Dorsolateral prefrontal cortex (tissue), 120 donors: ENCODE measurements at regions of chr6 and their contacts with region 1.

Region 1: DNA sequence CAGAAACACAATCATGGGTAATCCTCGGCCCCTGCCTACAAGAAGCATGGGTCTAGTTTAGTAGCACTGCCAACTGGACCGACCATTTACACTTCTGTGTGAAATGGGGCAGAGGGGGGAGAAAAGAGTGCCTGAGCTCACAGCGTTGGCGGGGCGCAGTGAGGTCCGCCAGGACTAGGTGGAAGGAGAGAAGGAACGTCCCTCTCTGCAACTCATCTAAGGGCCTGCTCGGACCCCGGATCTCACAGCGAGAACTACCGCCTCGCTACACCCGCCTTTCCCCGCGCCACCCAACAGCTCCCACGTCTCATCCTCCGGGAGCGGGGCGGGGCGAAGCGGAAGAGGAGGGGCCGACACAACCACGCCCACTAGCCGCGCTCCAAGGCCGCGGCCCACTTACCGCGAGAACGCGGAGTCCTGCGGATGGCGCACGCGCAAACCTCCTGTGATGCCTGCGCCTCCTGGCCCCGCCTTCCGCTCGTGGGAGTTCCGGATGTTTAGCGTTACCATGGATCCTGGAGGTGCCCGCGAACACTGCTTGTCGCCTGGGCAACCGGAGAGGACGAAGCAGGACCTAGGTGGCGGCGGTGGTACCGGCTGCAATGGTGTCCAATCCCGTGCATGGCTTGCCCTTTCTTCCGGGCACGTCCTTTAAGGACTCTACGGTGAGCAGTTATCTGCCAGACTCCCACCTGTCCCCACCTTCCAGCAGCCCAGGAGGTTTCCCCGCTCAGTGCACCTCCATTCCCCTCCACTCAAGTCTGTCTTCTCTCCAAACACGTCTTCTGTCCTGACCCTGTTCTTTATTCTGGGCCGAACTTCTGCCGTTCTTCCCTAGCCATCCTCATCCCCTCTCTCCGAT is at the start of gene EFHC1:
- DNase-seq: peak; percentile 96 to 99 (median 98)
- H3K4me3 ChIP-seq: peak within 1 kb of the TSS; percentile 49 to 100 (median 86)
- H3K27ac ChIP-seq: peak within 1 kb of the TSS in 58 of 59 donors; percentile 14 to 92 (median 77)
- H3K27me3 ChIP-seq: no peaks in the 10 kb centered on the region
- CTCF ChIP-seq: peak in 46 of 56 donors; percentile 7 to 65 (median 36)
- total RNA-seq, gene EFHC1: 18.1 to 39.8 (median 27.3) TPM

Region 2: GRCh38 chr6:52371656-52372191 is 48.3 kb before region 1 on chr6:
- intact Hi-C with region 1: no loop called
- DNase-seq: no peak
- H3K4me3 ChIP-seq: peak overlapping the region in 1 of 59 donors; percentile 18
- H3K27ac ChIP-seq: peak overlapping the region in 45 of 59 donors; percentile 7 to 99 (median 92)
- H3K27me3 ChIP-seq: no peaks in the 10 kb centered on the region
- CTCF ChIP-seq: no peak

Region 3: DNA sequence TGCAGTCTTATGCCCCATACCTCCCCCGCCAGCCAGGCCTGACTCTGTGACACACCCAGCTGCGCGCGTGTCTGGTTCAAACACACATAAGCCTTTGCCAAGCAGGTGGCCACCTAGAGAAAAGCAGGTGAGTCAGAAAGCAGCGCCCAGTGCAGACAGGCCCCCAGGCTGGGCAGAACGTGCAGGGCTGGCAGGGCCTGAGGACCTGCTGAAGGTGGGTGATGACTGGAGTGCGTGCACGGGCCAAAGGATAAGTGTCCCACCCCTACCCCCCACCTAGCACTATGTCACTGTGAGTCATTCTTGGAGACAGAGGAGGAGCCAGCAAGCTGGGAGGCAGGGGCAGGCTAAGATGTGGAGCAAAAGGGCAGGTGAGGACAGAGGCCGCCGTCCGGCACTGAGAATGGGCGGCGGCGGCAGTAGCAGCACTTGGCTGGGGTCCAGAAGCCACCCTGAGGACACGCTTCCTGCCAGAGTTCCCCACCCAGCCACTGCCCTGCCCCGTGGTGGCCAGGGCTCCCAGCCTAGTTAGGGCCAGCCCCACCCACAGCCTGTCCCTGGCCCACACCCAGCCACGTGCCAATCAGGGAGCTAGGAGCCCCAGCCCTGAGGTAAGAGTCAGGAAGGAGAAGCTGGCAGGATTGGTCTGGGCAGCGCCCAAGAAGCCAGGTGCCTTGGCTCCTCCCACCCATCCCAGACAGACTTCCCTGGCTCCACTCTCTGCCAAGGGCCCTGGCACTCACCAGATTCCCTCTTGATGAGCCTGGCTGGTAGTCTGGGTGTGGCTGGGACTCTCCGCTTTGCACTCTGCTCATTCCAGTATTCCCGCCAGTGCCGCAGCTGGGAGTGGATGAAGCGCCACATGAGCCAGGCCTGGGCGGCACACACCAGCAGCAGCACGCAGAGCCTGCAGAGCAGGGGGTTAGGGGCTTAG is 84.1 kb after region 1 on chr6:
- intact Hi-C with region 1: loop called in 1 of 2 experiments (anchors 10 kb)
- DNase-seq: peak in 1 of 10 donors; percentile 79
- H3K4me3 ChIP-seq: no peak overlapping the region
- H3K27ac ChIP-seq: peak overlapping the region in 9 of 59 donors; percentile 12 to 63 (median 37)
- H3K27me3 ChIP-seq: no peaks in the 10 kb centered on the region
- CTCF ChIP-seq: no peak

Region 4: DNA sequence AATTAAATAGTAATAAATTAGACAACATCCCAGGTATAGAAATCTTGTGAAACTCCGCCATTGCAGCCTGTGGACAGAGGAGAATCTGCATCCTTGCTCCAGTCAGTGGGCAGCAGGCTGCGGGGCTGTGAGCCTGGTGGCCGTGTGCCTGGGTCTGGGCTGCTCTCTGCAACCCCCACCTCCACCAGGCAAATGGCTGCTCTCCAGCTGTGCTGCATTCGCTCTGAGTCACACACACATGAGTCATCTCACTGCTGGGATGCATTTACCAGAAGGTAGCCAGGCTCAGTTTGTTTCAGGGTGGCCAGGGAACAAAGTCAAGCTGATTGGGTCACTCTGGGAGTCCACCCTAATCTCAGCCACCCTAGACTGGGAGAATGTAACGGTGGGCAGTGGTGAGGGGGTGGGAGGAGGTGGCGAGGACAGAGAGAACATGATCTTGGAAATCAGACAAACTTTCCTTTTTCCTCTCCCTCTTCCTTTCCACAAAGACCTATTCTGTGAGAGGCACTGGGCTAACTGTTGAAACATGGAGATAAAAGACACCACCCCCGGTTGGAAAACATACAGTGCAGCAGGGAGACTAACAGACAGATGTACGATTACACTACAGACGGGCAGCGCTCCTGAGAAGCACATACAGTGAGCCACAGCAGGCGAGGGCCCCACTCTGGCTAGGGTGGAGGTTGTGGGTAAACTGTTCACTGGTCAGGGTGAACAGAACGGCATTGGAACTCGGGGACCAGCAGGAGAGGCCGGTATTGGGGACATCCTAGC is 97.7 kb after region 1 on chr6:
- intact Hi-C with region 1: loop called in 1 of 2 experiments (anchors 5 kb)
- DNase-seq: peak in 9 of 10 donors; percentile 50 to 95 (median 82)
- H3K4me3 ChIP-seq: peak overlapping the region in 36 of 59 donors; percentile 2 to 49 (median 24)
- H3K27ac ChIP-seq: peak overlapping the region; percentile 32 to 98 (median 84)
- H3K27me3 ChIP-seq: no peaks in the 10 kb centered on the region
- CTCF ChIP-seq: peak in 4 of 56 donors; percentile 10 to 30 (median 22)

Region 5: GRCh38 chr6:52577022-52577777 is 157.2 kb after region 1 on chr6 and contains the start of gene TRAM2:
- intact Hi-C with region 1: loop called (anchors 2 kb)
- DNase-seq: peak; percentile 39 to 86 (median 63)
- H3K4me3 ChIP-seq: peak within 1 kb of the TSS; percentile 57 to 97 (median 86)
- H3K27ac ChIP-seq: peak within 1 kb of the TSS; percentile 46 to 98 (median 93)
- H3K27me3 ChIP-seq: no peaks in the 10 kb centered on the region
- CTCF ChIP-seq: peak in 18 of 56 donors; percentile 5 to 35 (median 14)
- total RNA-seq, gene TRAM2: 2.9 to 8.9 (median 5.2) TPM

Region 6: GRCh38 chr6:52598123-52598823 is 178.2 kb after region 1 on chr6:
- intact Hi-C with region 1: loop called in 1 of 2 experiments (anchors 2 kb)
- DNase-seq: peak in 6 of 10 donors; percentile 20 to 60 (median 44)
- H3K4me3 ChIP-seq: peak overlapping the region in 52 of 59 donors; percentile 1 to 61 (median 40)
- H3K27ac ChIP-seq: peak overlapping the region in 3 of 59 donors; percentile 25 to 64 (median 27)
- H3K27me3 ChIP-seq: no peaks in the 10 kb centered on the region
- CTCF ChIP-seq: peak; percentile 33 to 82 (median 66)

Region 7: DNA sequence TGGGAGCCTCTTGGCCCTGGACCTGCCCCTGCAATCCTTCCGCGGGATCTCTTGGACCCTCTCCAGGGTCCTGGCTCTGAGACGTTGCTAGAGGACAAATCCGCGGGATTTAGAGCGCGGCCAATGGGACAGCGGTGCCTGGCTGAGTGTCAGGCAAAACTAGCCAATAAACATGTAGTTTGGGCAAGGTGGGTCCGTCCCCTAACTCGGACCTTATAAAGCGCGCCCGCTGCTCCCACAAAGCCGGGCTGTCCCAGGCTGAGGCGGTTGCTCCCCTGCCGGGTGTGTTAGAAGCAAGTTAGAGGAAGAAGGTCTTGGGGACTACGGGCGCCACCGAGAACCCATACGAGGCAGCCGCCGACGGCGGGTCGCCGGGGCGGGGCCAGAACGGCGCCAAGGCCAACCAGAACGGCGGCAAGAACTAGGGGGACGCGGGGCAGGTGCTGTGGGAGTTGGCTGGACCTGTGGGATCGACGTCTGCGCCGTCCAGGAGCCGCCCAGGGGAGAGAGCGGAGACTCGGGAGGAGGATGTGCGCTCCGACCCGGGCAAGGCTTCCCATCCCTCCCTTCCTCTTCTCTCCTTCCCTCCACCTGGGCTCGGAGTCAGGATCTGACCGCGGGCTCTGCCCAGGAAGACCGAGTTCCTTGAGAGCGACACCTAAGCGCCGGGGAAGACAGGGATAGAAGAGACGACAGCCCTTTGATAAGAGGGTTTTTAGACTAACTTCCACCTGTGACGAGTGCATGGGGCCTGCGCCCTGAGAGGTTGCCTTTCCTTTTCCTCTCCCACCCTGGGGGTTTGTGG is 244.3 kb after region 1 on chr6:
- intact Hi-C with region 1: loop called (anchors 1 to 2 kb)
- DNase-seq: peak; percentile 65 to 94 (median 90)
- H3K4me3 ChIP-seq: peak overlapping the region; percentile 60 to 97 (median 79)
- H3K27ac ChIP-seq: peak overlapping the region in 28 of 59 donors; percentile 1 to 76 (median 50)
- H3K27me3 ChIP-seq: no peaks in the 10 kb centered on the region
- CTCF ChIP-seq: no peak